Caco-2 (cell line): ENCODE measurements at regions of chr10 and their contacts with region 1.

Region 1: GRCh38 chr10:22010973-22011408 is 7.5 kb upstream of the DNAJC1 start:
- DNase-seq: no peak
- H3K4me3 ChIP-seq: no peak overlapping the region
- H3K4me3 Mint-ChIP-seq: no peak overlapping the region
- H3K27ac Mint-ChIP-seq: no peak overlapping the region
- H3K4me1 ChIP-seq: no peaks in the 10 kb centered on the region
- H3K4me1 Mint-ChIP-seq: no peaks in the 10 kb centered on the region
- H3K27me3 ChIP-seq: no peaks in the 10 kb centered on the region
- H3K27me3 Mint-ChIP-seq: peaks cover 16% of the 10 kb centered on the region
- CTCF ChIP-seq: peak; percentile 37 to 76

Region 2: DNA sequence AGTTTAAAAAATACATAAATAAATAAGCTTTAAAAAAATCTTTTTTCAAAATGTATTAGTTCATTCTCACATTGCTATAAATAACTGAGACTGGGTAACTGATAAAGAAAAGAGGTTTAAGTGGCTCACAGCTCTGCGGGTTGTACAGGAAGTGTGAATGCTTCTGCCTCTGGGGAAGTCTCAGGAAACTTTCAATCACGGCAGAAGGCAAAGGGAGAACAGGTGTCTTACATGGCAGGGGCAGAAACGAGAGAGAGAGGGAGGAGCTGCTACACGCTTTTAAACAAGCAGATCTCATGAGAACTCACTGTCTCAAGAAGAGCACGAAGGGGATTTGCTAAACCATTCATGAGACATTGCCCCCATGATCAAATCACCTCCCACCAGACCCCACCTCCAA is 122.0 kb before region 1 on chr10:
- CTCF ChIA-PET with region 1: no interaction called
- POLR2A ChIA-PET with region 1: no interaction called
- intact Hi-C with region 1: no loop called
- DNase-seq: no peak
- H3K4me3 ChIP-seq: no peak overlapping the region
- H3K4me3 Mint-ChIP-seq: no peak overlapping the region
- H3K27ac Mint-ChIP-seq: no peak overlapping the region
- H3K4me1 ChIP-seq: no peaks in the 10 kb centered on the region
- H3K4me1 Mint-ChIP-seq: no peaks in the 10 kb centered on the region
- H3K27me3 ChIP-seq: no peaks in the 10 kb centered on the region
- H3K27me3 Mint-ChIP-seq: no peaks in the 10 kb centered on the region
- CTCF ChIP-seq: no peak

Region 3: GRCh38 chr10:22054961-22055360 is 44.0 kb after region 1 on chr10:
- CTCF ChIA-PET with region 1: no interaction called
- POLR2A ChIA-PET with region 1: no interaction called
- intact Hi-C with region 1: no loop called
- DNase-seq: no peak
- H3K4me3 ChIP-seq: no peak overlapping the region
- H3K4me3 Mint-ChIP-seq: no peak overlapping the region
- H3K27ac Mint-ChIP-seq: no peak overlapping the region
- H3K4me1 ChIP-seq: no peaks in the 10 kb centered on the region; the same call in 1 of the 2 replicates
- H3K4me1 Mint-ChIP-seq: peaks cover 16% of the 10 kb centered on the region
- H3K27me3 ChIP-seq: no peaks in the 10 kb centered on the region
- H3K27me3 Mint-ChIP-seq: no peaks in the 10 kb centered on the region
- CTCF ChIP-seq: no peak

Region 4: GRCh38 chr10:22067099-22067498 is 56.1 kb after region 1 on chr10:
- CTCF ChIA-PET with region 1: no interaction called
- POLR2A ChIA-PET with region 1: no interaction called
- intact Hi-C with region 1: loop called (anchors 2 kb)
- DNase-seq: no peak
- H3K4me3 ChIP-seq: no peak overlapping the region
- H3K4me3 Mint-ChIP-seq: no peak overlapping the region
- H3K27ac Mint-ChIP-seq: no peak overlapping the region
- H3K4me1 ChIP-seq: no peaks in the 10 kb centered on the region
- H3K4me1 Mint-ChIP-seq: no peaks in the 10 kb centered on the region
- H3K27me3 ChIP-seq: no peaks in the 10 kb centered on the region
- H3K27me3 Mint-ChIP-seq: peaks cover 14% of the 10 kb centered on the region
- CTCF ChIP-seq: no peak

Region 5: DNA sequence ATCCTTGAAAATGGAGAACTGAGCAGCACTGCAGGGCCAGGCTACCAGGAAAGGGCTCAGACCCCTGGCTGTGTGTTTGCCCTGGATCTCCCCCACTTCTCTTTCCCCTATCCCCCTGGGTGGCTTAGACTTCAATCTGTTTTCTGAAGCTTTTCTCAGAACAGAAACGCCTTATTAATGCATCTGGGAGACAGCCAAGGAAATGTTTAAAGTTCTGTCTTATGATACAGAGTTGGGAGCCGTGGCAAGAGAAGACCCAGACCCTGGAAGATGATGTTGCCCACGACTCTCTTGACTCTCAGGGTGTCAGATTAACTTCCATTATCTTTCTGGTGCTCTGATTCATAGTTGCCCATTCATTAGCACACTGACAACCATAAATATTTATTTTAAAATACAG is 99.8 kb after region 1 on chr10:
- CTCF ChIA-PET with region 1: no interaction called
- POLR2A ChIA-PET with region 1: no interaction called
- intact Hi-C with region 1: no loop called
- DNase-seq: no peak
- H3K4me3 ChIP-seq: no peak overlapping the region
- H3K4me3 Mint-ChIP-seq: no peak overlapping the region
- H3K27ac Mint-ChIP-seq: no peak overlapping the region
- H3K4me1 ChIP-seq: no peaks in the 10 kb centered on the region
- H3K4me1 Mint-ChIP-seq: no peaks in the 10 kb centered on the region
- H3K27me3 ChIP-seq: no peaks in the 10 kb centered on the region
- H3K27me3 Mint-ChIP-seq: peaks cover 8% of the 10 kb centered on the region
- CTCF ChIP-seq: no peak